PC-3 (cell line): ENCODE measurements at regions of chr5 and their contacts with region 1.

Region 1: DNA sequence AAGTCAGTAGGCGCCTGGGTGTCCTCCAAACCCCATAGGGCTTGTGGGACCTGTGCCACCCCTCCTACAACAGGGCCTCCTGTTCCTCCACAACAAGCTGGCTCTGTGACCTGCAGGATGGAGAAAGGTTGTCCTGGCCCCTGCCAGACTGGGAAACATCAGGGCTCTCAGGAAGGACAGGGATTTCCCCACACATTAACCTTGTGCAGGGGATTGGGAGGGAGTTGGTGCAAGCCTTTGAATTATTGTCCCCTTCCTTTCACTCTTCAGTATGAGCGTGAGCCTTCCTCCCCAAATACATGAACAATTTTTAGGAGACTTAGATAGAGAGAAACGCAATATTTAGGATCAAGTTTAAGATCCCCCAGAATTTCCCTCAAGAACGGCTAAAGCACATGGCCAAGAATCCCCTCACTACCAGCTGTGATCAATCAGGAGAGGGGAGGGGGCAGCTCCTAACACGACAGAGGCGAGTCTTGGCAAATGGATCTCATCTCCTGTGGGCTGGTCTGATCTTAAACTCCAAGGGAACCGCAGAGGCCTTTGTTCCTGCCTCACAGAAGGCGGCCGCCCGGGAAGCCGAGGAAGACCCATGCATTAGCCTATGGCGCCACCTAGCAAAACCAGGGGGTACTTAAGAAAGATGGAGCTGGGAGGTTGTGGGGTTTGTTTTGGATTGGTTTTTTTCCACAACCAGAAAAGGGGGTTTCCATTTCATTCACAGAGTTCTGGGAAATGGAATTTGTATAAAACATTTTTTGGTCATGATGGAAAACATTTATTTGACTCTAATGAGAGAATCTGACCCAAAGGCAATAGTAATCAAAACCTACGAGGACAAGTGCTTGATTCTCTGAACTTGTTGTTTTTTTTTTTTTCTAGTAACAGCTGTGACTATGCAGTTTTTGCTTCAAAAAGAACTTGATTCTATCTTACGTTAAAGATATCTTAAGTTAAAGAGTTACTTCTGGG is 36.1 kb upstream of the OSMR start:
- DNase-seq: peak; percentile 90
- ATAC-seq: peak; percentile 53
- H3K4me3 ChIP-seq: no peak overlapping the region
- H3K27ac ChIP-seq: no peak overlapping the region
- H3K4me1 ChIP-seq: peaks cover 41% of the 10 kb centered on the region
- H3K27me3 ChIP-seq: no peaks in the 10 kb centered on the region
- CTCF ChIP-seq: peak; percentile 97

Region 2: GRCh38 chr5:38265546-38266179 is 544.0 kb before region 1 on chr5:
- CTCF ChIA-PET with region 1: no interaction called
- POLR2A ChIA-PET with region 1: no interaction called
- intact Hi-C with region 1: loop called (anchors 5 kb)
- DNase-seq: peak; percentile 86
- ATAC-seq: peak; percentile 98
- H3K4me3 ChIP-seq: no peak overlapping the region
- H3K27ac ChIP-seq: no peak overlapping the region
- H3K4me1 ChIP-seq: no peaks in the 10 kb centered on the region
- H3K27me3 ChIP-seq: peaks cover 64% of the 10 kb centered on the region
- CTCF ChIP-seq: peak; percentile 94

Region 3: DNA sequence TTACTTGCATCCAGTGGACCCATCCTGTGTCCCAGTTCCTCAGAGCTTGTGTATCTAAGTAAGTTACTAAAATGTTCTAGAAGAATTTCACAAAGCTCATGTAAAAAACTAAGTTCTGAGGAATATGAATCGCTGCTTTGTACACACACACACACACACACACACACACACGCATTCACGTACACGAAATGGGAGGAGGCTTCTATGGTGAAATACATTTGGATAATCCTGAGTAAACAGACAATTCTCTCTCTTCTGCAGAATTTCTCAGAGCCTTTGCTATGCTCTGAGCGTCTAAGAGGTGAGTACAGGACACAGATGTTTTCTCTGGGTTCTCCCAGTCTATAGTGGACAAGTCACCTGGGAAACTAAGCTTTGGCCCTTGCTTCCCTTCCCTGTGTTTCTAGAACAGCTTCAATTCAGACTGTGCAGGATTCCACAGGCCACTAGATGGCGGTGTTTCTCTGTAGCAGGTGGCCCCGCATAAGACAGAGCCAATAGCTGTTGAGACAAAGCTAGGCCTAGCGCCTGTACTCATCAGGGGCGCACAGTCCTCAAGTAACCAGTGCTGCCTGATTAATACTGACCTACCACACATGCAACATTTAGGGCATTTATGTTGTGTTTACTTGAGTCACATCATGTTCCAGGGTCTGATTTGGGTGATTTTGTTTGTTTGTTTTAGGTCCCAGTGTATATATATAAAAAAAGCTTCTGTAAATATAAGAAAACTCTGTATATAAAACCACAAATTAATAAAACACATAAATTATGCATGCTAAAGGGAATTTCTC is 368.0 kb before region 1 on chr5:
- CTCF ChIA-PET with region 1: interaction called, 114 read pairs
- POLR2A ChIA-PET with region 1: interaction called, 3 read pairs
- intact Hi-C with region 1: loop called (anchors 1 kb)
- DNase-seq: peak; percentile 98
- ATAC-seq: peak; percentile 99
- H3K4me3 ChIP-seq: no peak overlapping the region
- H3K27ac ChIP-seq: no peak overlapping the region
- H3K4me1 ChIP-seq: no peaks in the 10 kb centered on the region
- H3K27me3 ChIP-seq: no peaks in the 10 kb centered on the region
- CTCF ChIP-seq: peak; percentile 99

Region 4: GRCh38 chr5:38497946-38498345 is 311.7 kb before region 1 on chr5:
- CTCF ChIA-PET with region 1: no interaction called
- POLR2A ChIA-PET with region 1: no interaction called
- intact Hi-C with region 1: loop called (anchors 1 kb)
- DNase-seq: peak; percentile 52
- ATAC-seq: peak; percentile 88
- H3K4me3 ChIP-seq: no peak overlapping the region
- H3K27ac ChIP-seq: no peak overlapping the region
- H3K4me1 ChIP-seq: peaks cover 7% of the 10 kb centered on the region
- H3K27me3 ChIP-seq: no peaks in the 10 kb centered on the region
- CTCF ChIP-seq: peak; percentile 62

Region 5: GRCh38 chr5:38598994-38599611 is 210.6 kb before region 1 on chr5:
- CTCF ChIA-PET with region 1: interaction called, 4 read pairs
- POLR2A ChIA-PET with region 1: no interaction called
- intact Hi-C with region 1: loop called (anchors 5 kb)
- DNase-seq: peak; percentile 92
- ATAC-seq: peak; percentile 89
- H3K4me3 ChIP-seq: no peak overlapping the region
- H3K27ac ChIP-seq: peak overlapping the region; percentile 34
- H3K4me1 ChIP-seq: peaks cover 63% of the 10 kb centered on the region
- H3K27me3 ChIP-seq: no peaks in the 10 kb centered on the region
- CTCF ChIP-seq: no peak

Region 6: GRCh38 chr5:38755179-38755578 is 54.5 kb before region 1 on chr5:
- CTCF ChIA-PET with region 1: interaction called, 5 read pairs
- POLR2A ChIA-PET with region 1: interaction called, 3 read pairs
- intact Hi-C with region 1: loop called (anchors 1 kb)
- DNase-seq: peak; percentile 77
- ATAC-seq: peak; percentile 84
- H3K4me3 ChIP-seq: no peak overlapping the region
- H3K27ac ChIP-seq: peak overlapping the region; percentile 84
- H3K4me1 ChIP-seq: peaks cover 35% of the 10 kb centered on the region
- H3K27me3 ChIP-seq: no peaks in the 10 kb centered on the region
- CTCF ChIP-seq: peak; percentile 29; the same call in 1 of the 2 replicates

Region 7: DNA sequence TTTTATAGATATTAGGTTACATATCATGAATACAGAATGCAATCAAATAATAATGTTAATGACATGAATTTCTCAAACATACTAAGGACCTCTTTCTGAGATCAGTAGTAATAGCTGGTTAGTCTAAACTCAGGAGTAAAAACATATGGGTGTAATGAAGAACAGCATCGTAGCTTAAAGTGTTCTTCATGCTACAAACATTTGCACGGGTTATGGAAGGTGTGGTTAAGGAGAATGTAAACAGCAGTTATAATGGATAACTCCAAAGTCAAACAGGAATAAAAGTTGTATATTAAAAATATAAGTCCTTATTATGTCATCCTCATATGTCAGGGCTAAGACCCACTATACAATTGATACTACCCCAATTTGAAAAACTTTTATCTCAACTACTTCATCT is 152.0 kb after region 1 on chr5:
- CTCF ChIA-PET with region 1: no interaction called
- POLR2A ChIA-PET with region 1: no interaction called
- intact Hi-C with region 1: no loop called
- DNase-seq: no peak
- ATAC-seq: no peak
- H3K4me3 ChIP-seq: no peak overlapping the region
- H3K27ac ChIP-seq: no peak overlapping the region
- H3K4me1 ChIP-seq: no peaks in the 10 kb centered on the region
- H3K27me3 ChIP-seq: no peaks in the 10 kb centered on the region
- CTCF ChIP-seq: no peak